Mammary epithelial cell (primary cell): ENCODE measurements at regions of chr6 and their contacts with region 1.

Region 1: GRCh38 chr6:35663447-35664235 is 25.1 kb downstream of the FKBP5 start:
- DNase-seq: peak; percentile 50
- H3K4me3 ChIP-seq: no peak overlapping the region
- H3K27ac ChIP-seq: no peak overlapping the region
- H3K4me1 ChIP-seq: peaks cover 24% of the 10 kb centered on the region
- H3K27me3 ChIP-seq: no peaks in the 10 kb centered on the region
- CTCF ChIP-seq: no peak

Region 2: DNA sequence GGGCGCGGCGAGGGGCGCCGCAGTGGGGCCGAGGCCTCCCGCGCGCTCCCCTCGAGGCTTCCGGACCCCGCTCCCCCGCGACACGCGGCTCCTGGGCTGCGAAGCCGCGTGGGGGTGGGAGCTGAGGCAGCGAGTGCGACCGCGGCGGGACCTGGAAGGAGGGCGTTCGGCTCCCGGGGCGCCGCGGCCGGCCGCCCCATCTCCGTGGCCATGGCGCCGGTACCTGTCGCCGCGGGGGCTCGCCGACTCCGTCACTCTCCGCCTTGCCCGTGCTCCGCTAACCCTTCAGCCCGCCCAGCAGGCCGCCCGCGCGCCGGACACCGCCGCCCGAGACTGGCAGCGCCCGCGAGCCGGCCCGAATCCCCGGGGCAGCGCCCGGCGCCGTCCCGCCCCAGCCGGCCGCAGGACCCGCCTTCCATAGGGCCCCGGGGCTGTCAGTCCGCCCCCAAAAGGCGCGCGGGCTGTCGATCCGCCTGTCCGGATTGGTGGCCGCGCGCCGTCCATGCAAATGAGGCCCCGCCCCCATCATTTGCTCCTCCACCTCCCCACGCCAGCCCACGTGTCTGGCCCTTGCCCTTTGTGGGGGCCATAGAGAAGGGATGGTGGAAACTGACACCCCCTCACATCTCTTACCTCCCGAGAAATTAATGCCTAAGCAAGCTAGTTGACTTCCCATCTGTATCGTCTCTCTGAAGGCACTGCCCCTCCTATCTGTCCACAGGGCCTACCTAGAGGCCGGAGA is 25.1 kb after region 1 on chr6 and contains the start of gene FKBP5:
- CTCF ChIA-PET with region 1: no interaction called
- dilution Hi-C with region 1: no loop called
- in situ Hi-C with region 1: no loop called
- intact Hi-C with region 1: loop called (anchors 2 kb)
- DNase-seq: peak; percentile 89
- H3K4me3 ChIP-seq: peak within 1 kb of the TSS; percentile 65 to 94 (median 92)
- H3K27ac ChIP-seq: peak within 1 kb of the TSS; percentile 91
- H3K4me1 ChIP-seq: peaks cover 9% of the 10 kb centered on the region
- H3K27me3 ChIP-seq: no peaks in the 10 kb centered on the region
- CTCF ChIP-seq: no peak
- total RNA-seq, gene FKBP5: 60.7 to 97.9 TPM

Region 3: GRCh38 chr6:35719404-35719829 is 55.8 kb after region 1 on chr6:
- CTCF ChIA-PET with region 1: no interaction called
- dilution Hi-C with region 1: no loop called
- in situ Hi-C with region 1: no loop called
- intact Hi-C with region 1: no loop called
- DNase-seq: no peak
- H3K4me3 ChIP-seq: no peak overlapping the region
- H3K27ac ChIP-seq: no peak overlapping the region
- H3K4me1 ChIP-seq: no peaks in the 10 kb centered on the region
- H3K27me3 ChIP-seq: no peaks in the 10 kb centered on the region
- CTCF ChIP-seq: no peak

Region 4: GRCh38 chr6:35804996-35805736 is 141.5 kb after region 1 on chr6 and contains the start of gene LHFPL5:
- CTCF ChIA-PET with region 1: no interaction called
- dilution Hi-C with region 1: no loop called
- in situ Hi-C with region 1: no loop called
- intact Hi-C with region 1: no loop called
- DNase-seq: no peak
- H3K4me3 ChIP-seq: no peak within 1 kb of the TSS
- H3K27ac ChIP-seq: no peak within 1 kb of the TSS
- H3K4me1 ChIP-seq: no peaks in the 10 kb centered on the region
- H3K27me3 ChIP-seq: no peaks in the 10 kb centered on the region
- CTCF ChIP-seq: no peak
- total RNA-seq, gene LHFPL5: not detected

Region 5: DNA sequence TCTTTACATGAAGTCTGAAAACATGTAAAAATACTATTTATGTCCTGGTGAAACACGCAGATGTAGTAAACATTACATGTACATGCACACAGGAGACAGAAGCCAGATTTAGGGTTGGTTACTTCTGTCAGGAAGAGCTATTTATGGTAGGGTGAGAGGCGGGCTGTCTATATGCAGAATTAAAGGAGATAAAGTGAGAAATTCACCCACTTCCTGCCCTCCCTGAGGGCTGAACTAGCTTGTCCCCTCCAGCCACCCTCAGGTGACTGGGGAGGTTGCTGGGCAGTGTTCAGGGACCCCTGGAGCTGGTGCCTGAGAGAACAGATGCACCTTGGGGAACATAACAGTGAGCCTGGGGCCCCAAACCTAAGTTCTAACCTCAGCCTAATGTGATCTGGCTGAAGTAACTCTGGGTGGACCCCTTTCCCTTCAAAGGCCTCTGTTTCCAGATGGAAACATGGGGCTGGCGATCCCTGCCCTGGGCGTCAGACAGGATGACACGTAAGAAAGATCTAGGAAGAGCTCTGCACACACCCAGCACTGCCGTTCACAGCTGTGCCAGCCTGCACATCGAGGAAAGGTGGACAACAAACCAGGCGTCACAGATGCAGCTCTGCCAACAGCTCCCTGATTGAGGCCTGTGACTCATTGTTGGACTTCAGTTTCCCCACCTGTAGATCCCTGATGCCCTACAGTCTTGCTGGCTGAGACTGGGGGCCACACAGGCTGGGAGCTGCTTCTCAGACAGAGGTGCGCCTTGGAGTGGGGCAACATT is 1292.2 kb after region 1 on chr6:
- CTCF ChIA-PET with region 1: no interaction called
- dilution Hi-C with region 1: no loop called
- in situ Hi-C with region 1: no loop called
- intact Hi-C with region 1: no loop called
- DNase-seq: peak; percentile 50
- H3K4me3 ChIP-seq: no peak overlapping the region
- H3K27ac ChIP-seq: no peak overlapping the region
- H3K4me1 ChIP-seq: peaks cover 3% of the 10 kb centered on the region
- H3K27me3 ChIP-seq: no peaks in the 10 kb centered on the region
- CTCF ChIP-seq: no peak